ENCODE measurements at regions of chr2 and their contacts with region 1.

Region 1: DNA sequence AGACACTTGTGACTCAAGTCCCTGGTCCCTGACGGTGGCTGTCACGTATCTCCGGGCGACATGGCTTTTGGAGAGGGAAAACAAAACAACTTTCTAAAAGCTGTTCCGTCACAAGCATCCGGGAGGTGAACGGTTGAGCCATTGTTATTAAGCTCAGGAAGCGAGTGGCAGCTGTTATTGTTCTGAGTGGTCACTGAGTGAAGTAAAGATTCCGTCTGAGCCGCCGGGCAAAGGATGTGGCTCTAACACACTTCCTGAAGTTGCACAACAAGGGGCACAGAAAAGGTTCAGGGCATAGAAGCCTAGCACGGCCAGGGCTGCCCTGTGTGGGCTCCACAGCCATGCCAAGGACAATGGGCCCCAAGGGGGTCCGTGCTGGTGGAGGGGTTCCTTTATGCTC is 24.3 kb downstream of the INPP5D start:
- DNase-seq: no peak
- H3K4me3 Mint-ChIP-seq: peak overlapping the region; percentile 82
- H3K27ac Mint-ChIP-seq: peak overlapping the region; percentile 91
- H3K4me1 Mint-ChIP-seq: peaks cover 83% of the 10 kb centered on the region
- H3K27me3 Mint-ChIP-seq: no peaks in the 10 kb centered on the region

Region 2: GRCh38 chr2:232781765-232782164 is 302.7 kb before region 1 on chr2:
- intact Hi-C with region 1: loop called (anchors 2 kb)
- DNase-seq: peak; percentile 27
- H3K4me3 Mint-ChIP-seq: no peak overlapping the region
- H3K27ac Mint-ChIP-seq: peak overlapping the region; percentile 85
- H3K4me1 Mint-ChIP-seq: peaks cover 22% of the 10 kb centered on the region
- H3K27me3 Mint-ChIP-seq: no peaks in the 10 kb centered on the region

Region 3: DNA sequence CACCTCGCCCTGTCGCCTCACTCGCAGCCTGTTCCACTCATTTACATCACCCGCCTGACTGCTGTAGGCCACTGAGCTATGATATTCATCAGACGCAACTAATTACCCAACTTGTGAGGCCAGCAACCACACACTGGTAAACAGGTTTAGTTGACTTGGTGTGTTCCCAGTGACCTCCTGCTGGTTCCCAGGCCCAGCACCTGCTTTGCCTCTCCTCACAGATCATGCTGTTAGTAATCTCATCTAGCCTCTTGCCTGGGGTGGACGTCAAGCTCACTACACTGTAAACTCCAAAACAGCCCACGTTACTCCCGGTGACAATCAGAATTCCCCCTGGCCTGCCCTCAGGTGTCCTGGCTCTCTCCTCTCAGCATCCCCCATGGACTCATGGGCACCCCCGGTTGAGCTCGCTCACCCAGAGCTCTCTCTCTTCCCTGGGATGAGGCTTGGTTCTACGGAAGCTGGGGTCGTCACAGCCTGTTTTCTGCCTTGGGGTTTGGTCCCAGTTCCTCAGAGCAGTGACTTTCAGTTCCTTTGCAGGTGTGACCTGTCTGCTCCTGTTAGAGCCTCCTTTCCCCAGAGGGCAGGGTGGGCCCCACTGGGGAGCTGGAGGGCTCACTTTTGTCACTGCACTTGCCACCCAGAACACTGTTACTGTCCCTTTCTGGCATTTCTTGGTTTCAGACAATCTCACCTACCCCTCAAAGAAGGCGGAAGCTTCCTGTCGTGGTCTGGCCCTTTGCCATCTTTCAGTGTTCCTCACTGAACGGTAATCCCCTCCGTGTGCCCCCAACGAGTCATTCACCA is 15.9 kb after region 1 on chr2:
- intact Hi-C with region 1: loop called (anchors 1 kb)
- DNase-seq: no peak
- H3K4me3 Mint-ChIP-seq: peak overlapping the region; percentile 40
- H3K27ac Mint-ChIP-seq: peak overlapping the region; percentile 69
- H3K4me1 Mint-ChIP-seq: peaks cover 63% of the 10 kb centered on the region
- H3K27me3 Mint-ChIP-seq: no peaks in the 10 kb centered on the region

Region 4: GRCh38 chr2:233234264-233234663 is 149.8 kb after region 1 on chr2:
- intact Hi-C with region 1: loop called (anchors 1 kb)
- DNase-seq: peak; percentile 8
- H3K4me3 Mint-ChIP-seq: peak overlapping the region; percentile 43
- H3K27ac Mint-ChIP-seq: peak overlapping the region; percentile 86
- H3K4me1 Mint-ChIP-seq: peaks cover 62% of the 10 kb centered on the region
- H3K27me3 Mint-ChIP-seq: no peaks in the 10 kb centered on the region

Region 5: DNA sequence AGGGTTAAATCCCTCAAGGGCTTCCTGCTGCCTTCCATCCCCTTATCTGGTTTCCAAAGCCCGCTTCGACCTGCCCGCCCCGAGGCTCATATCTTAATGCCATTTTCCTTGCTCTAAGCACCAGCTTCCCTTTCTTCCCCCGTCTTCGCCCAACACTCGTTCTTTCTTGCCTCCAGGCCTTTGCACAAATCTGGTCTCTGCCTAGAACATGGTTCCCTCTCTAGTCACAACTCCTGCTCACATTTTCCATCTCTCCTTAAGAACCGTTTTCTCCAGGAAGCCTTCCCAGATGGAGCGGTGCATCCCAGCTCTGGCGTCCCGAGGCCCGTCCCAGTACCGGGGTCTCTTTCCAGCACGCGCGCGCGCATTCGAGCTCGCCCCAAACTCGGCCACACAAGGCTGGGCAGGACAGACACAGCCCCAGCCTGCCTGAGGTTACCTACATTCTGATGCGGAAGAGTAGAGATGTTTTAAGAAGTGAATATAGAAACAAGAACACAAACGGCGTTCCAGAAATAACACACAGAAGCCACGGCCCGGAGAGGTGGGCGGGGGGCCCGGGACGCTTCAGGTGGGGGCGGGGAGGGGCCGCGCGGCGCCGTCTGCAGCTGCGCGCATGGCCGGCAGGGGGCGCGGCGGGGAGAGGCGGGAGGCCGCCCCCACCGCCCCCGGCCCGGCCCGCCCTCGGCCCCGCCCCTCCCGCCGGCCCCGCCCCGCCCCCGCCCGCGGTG is 269.4 kb after region 1 on chr2 and contains the start of gene DGKD:
- intact Hi-C with region 1: loop called (anchors 5 kb)
- DNase-seq: no peak
- H3K4me3 Mint-ChIP-seq: peak within 1 kb of the TSS; percentile 87
- H3K27ac Mint-ChIP-seq: peak within 1 kb of the TSS; percentile 90
- H3K4me1 Mint-ChIP-seq: peaks cover 67% of the 10 kb centered on the region
- H3K27me3 Mint-ChIP-seq: no peaks in the 10 kb centered on the region
- total RNA-seq, gene DGKD: 42.5 and 43.7 TPM in 2 replicates